CD8-positive, alpha-beta T cell (primary cell): ENCODE measurements at regions of chr11 and their contacts with region 1.

Region 1: DNA sequence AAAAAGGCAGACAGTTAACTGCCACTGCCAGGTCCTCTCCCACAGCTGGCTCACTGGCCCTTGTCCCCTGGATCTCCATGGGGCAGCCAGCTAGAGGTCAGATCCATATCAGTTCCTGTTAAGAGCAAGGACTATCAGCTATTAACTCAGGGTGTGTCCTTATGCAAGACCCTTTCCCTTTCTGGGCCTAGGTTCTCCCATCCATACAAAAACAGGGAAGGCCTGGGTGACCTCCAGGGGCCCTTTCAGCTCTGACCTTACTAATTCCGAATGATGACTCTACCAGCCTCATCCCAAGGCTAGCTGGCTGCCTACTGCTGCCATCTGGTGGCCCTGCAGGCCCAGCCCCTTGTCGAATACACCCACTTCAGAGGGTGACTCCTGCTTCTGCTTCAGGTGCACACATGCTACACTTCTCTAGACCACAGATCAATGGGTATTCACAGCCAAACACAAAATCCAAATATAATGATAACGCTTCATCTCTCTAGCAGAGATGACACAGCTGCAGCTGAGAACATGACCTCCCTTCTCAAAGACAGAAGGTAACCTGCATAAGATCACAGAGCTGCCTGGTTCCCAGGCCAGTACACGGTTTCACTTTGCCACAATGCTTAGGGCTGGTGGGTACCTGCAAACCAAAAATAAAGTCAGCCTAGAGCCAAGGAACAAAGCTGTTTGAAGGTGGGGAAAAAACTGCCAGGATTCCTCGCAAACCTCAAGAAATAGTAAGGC is 34.1 kb downstream of the SERGEF start:
- DNase-seq: peak in 2 of 9 experiments; percentile 7 to 8
- ATAC-seq: no peak
- H3K4me3 ChIP-seq: no peak overlapping the region
- H3K4me3 Mint-ChIP-seq: no peak overlapping the region
- H3K27ac ChIP-seq: no peak overlapping the region
- H3K27ac Mint-ChIP-seq: no peak overlapping the region
- H3K4me1 ChIP-seq: no peaks in the 10 kb centered on the region
- H3K4me1 Mint-ChIP-seq: peaks cover 3% of the 10 kb centered on the region
- H3K27me3 ChIP-seq: no peaks in the 10 kb centered on the region
- H3K27me3 Mint-ChIP-seq: no peaks in the 10 kb centered on the region
- CTCF ChIP-seq: no peak

Region 2: GRCh38 chr11:17598700-17599459 is 379.8 kb before region 1 on chr11:
- CTCF ChIA-PET with region 1: interaction called, 3 read pairs
- POLR2A ChIA-PET with region 1: no interaction called
- intact Hi-C with region 1: loop called in 1 of 2 experiments (anchors 2 kb)
- DNase-seq: peak; percentile 18 to 73 (median 62)
- ATAC-seq: peak; percentile 73
- H3K4me3 ChIP-seq: no peak overlapping the region
- H3K4me3 Mint-ChIP-seq: no peak overlapping the region
- H3K27ac ChIP-seq: no peak overlapping the region
- H3K27ac Mint-ChIP-seq: no peak overlapping the region
- H3K4me1 ChIP-seq: no peaks in the 10 kb centered on the region
- H3K4me1 Mint-ChIP-seq: peaks cover 2% of the 10 kb centered on the region
- H3K27me3 ChIP-seq: no peaks in the 10 kb centered on the region
- H3K27me3 Mint-ChIP-seq: peaks cover 4% of the 10 kb centered on the region
- CTCF ChIP-seq: peak; percentile 62

Region 3: GRCh38 chr11:17730608-17731462 is 247.9 kb before region 1 on chr11:
- CTCF ChIA-PET with region 1: interaction called, 33 read pairs
- POLR2A ChIA-PET with region 1: no interaction called
- intact Hi-C with region 1: loop called in 1 of 2 experiments (anchors 1 kb)
- DNase-seq: peak in 8 of 9 experiments; percentile 25 to 63 (median 46)
- ATAC-seq: peak; percentile 51
- H3K4me3 ChIP-seq: no peak overlapping the region
- H3K4me3 Mint-ChIP-seq: no peak overlapping the region
- H3K27ac ChIP-seq: no peak overlapping the region
- H3K27ac Mint-ChIP-seq: no peak overlapping the region
- H3K4me1 ChIP-seq: no peaks in the 10 kb centered on the region
- H3K4me1 Mint-ChIP-seq: peaks cover 5% of the 10 kb centered on the region
- H3K27me3 ChIP-seq: peaks cover 3% of the 10 kb centered on the region in 2 experiments
- H3K27me3 Mint-ChIP-seq: peaks cover 43% of the 10 kb centered on the region
- CTCF ChIP-seq: peak; percentile 51

Region 4: DNA sequence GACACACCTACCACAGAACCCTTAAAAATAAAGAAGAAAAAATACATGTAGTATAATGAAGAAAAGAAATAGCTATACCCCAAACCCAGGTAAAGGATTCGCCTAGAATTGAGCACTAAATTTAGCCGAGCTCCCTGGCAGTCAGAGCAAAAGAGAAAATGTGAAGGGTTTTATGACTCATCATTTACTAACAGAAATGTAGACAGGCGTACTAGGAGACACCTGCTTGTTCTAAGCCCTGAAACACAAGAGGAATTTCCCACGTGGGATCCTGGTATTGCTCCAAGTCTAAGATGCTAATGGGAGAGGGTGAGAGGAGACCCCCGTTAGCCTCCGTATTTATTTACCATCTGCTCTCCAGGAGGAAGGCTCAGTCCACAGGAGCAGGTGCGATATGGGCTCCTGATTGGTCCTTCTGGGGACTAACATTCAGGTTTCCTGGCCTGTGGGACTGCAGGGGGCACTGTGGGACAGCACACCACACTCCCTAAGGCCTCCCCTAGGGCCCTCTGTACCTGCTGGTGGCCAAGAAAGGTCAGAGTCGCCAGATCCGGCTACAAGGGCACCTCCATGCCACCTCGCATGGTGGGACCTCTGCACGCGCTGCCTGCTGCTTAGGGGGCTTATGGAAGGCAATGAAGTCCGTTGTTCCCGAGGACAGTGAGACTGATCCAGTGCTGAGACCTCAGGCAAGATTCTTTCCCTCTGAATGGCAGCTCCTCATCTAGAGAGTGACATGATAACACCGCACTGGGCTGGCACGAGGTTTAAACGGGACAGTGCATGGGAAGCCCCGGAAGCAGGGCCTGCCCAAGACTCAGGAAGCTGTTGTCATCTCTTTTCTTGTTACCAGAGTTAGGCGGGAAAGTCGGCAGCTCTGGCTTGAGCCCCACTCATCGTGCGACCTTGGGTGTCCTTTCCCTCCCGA is 218.4 kb before region 1 on chr11:
- CTCF ChIA-PET with region 1: no interaction called
- POLR2A ChIA-PET with region 1: no interaction called
- intact Hi-C with region 1: no loop called
- DNase-seq: peak in 2 of 9 experiments; percentile 15 to 24
- ATAC-seq: no peak
- H3K4me3 ChIP-seq: no peak overlapping the region
- H3K4me3 Mint-ChIP-seq: no peak overlapping the region
- H3K27ac ChIP-seq: no peak overlapping the region
- H3K27ac Mint-ChIP-seq: no peak overlapping the region
- H3K4me1 ChIP-seq: no peaks in the 10 kb centered on the region
- H3K4me1 Mint-ChIP-seq: no peaks in the 10 kb centered on the region
- H3K27me3 ChIP-seq: no peaks in the 10 kb centered on the region
- H3K27me3 Mint-ChIP-seq: peaks cover 12% of the 10 kb centered on the region
- CTCF ChIP-seq: no peak

Region 5: GRCh38 chr11:17991783-17992433 is 13.2 kb after region 1 on chr11:
- CTCF ChIA-PET with region 1: interaction called, 41 read pairs
- POLR2A ChIA-PET with region 1: no interaction called
- intact Hi-C with region 1: no loop called
- DNase-seq: peak in 8 of 9 experiments; percentile 20 to 67 (median 44)
- ATAC-seq: peak; percentile 81
- H3K4me3 ChIP-seq: no peak overlapping the region
- H3K4me3 Mint-ChIP-seq: no peak overlapping the region
- H3K27ac ChIP-seq: no peak overlapping the region
- H3K27ac Mint-ChIP-seq: no peak overlapping the region
- H3K4me1 ChIP-seq: no peaks in the 10 kb centered on the region
- H3K4me1 Mint-ChIP-seq: no peaks in the 10 kb centered on the region
- H3K27me3 ChIP-seq: no peaks in the 10 kb centered on the region
- H3K27me3 Mint-ChIP-seq: no peaks in the 10 kb centered on the region
- CTCF ChIP-seq: peak; percentile 96

Region 6: DNA sequence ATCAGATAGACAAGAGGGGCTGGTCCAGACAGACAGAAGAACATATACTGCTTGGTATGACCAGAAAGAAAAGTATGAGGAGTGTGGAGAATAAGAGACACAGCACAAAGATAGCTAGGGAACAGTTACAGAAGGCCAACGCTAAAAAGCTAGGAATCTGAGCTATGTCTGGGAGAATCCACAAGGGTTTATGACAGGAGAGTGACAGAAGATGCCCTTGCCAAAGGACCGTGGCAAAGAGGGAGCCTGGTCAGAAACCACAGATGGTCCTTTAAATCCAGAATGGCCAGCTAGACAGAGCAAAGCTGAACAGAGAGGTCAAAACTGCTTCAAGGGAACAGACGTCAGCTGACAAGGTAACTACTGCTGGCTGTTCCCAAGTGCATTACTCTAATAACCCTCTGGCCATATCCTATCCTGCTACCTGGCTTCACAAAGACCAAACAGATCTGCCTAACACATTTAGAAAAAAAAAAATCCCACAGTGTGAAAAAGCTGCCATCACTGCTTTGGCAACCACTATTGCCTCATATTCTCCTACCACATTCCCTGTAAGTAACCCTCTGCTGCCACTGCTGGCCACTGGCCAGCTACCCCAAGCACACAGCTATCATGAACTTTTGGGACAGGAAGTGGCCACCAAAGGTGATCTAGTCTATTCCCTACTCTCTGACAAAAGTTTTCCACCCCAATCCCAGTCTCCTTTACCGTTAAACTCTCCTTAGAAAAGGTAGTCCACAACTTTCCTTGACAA is 26.8 kb after region 1 on chr11:
- CTCF ChIA-PET with region 1: no interaction called
- POLR2A ChIA-PET with region 1: no interaction called
- intact Hi-C with region 1: no loop called
- DNase-seq: no peak
- ATAC-seq: no peak
- H3K4me3 ChIP-seq: no peak overlapping the region
- H3K4me3 Mint-ChIP-seq: no peak overlapping the region
- H3K27ac ChIP-seq: no peak overlapping the region
- H3K27ac Mint-ChIP-seq: peak overlapping the region; percentile 64
- H3K4me1 ChIP-seq: no peaks in the 10 kb centered on the region
- H3K4me1 Mint-ChIP-seq: peaks cover 4% of the 10 kb centered on the region
- H3K27me3 ChIP-seq: no peaks in the 10 kb centered on the region
- H3K27me3 Mint-ChIP-seq: no peaks in the 10 kb centered on the region
- CTCF ChIP-seq: no peak